ENCODE measurements at regions of chr9 and their contacts with region 1.

Region 1: GRCh38 chr9:76526049-76526448 is 67.1 kb downstream of the GCNT1 start:
- DNase-seq: no peak
- H3K4me3 ChIP-seq: no peak overlapping the region
- H3K4me3 Mint-ChIP-seq: no peak overlapping the region
- H3K27ac Mint-ChIP-seq: no peak overlapping the region
- H3K4me1 ChIP-seq: no peaks in the 10 kb centered on the region
- H3K4me1 Mint-ChIP-seq: peaks cover 6% of the 10 kb centered on the region
- H3K27me3 ChIP-seq: no peaks in the 10 kb centered on the region
- H3K27me3 Mint-ChIP-seq: no peaks in the 10 kb centered on the region
- CTCF ChIP-seq: no peak

Region 2: DNA sequence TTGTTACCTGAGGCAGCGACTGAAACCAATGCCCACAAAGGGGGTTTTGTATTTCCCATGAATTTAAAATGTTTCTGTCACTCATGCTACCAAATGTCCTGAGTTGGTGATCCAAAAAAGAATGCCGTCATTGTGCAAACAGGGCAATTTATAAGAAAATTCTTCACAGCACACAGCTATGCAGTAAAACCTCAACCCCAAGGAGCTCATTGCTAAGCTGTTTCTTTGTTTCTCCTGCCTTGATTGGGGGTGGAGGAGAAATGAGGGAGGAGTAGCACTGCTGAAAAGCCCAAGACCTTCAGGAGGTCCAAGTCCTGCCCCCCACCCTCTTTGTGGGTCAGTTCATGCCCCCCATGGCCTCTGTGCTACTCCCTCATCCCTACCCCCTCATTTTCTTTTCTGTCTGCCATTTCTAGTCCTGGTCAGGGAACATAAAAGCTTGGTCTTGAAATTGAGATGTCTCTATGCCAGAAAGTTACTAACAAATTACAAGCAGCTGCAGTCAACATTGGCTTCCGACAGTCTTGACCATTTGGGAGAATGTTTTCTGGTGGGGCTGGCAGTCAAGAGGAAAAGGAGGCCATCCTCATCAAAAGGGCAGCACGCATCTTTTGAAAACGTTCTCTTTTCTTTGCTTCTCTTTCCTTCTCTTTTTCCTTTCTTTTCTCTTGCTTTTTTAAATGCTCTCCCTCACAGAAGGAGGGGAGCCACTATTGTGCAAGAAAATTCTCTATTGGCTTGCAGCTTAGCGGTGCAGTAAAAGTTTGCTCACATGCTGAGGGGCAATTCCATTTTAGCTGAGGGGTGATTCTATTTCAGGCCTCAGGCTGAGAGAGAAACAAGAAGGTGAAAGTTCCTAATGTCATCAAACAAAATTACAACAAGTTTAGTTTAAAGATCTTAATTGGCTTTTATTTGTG is 66.3 kb after region 1 on chr9:
- CTCF ChIA-PET with region 1: no interaction called
- POLR2A ChIA-PET with region 1: interaction called, 13 read pairs
- intact Hi-C with region 1: no loop called
- DNase-seq: no peak
- H3K4me3 ChIP-seq: no peak overlapping the region
- H3K4me3 Mint-ChIP-seq: no peak overlapping the region
- H3K27ac Mint-ChIP-seq: no peak overlapping the region
- H3K4me1 ChIP-seq: peaks cover 3% of the 10 kb centered on the region; the same call in 1 of the 2 replicates
- H3K4me1 Mint-ChIP-seq: peaks cover 12% of the 10 kb centered on the region
- H3K27me3 ChIP-seq: no peaks in the 10 kb centered on the region
- H3K27me3 Mint-ChIP-seq: no peaks in the 10 kb centered on the region
- CTCF ChIP-seq: no peak

Region 3: GRCh38 chr9:76859860-76860259 is 333.8 kb after region 1 on chr9:
- CTCF ChIA-PET with region 1: no interaction called
- POLR2A ChIA-PET with region 1: no interaction called
- intact Hi-C with region 1: no loop called
- DNase-seq: no peak
- H3K4me3 ChIP-seq: no peak overlapping the region
- H3K4me3 Mint-ChIP-seq: no peak overlapping the region
- H3K27ac Mint-ChIP-seq: no peak overlapping the region
- H3K4me1 ChIP-seq: no peaks in the 10 kb centered on the region
- H3K4me1 Mint-ChIP-seq: no peaks in the 10 kb centered on the region
- H3K27me3 ChIP-seq: no peaks in the 10 kb centered on the region
- H3K27me3 Mint-ChIP-seq: no peaks in the 10 kb centered on the region
- CTCF ChIP-seq: no peak